Activated CD4-positive, alpha-beta T cell treated with anti-CD3 and anti-CD28 coated beads, Interleukin-2, amount 10 ng/mL, durations not matched to agents 24 days and 14 days (primary cell): ENCODE measurements at regions of chr12 and their contacts with region 1.

Region 1: DNA sequence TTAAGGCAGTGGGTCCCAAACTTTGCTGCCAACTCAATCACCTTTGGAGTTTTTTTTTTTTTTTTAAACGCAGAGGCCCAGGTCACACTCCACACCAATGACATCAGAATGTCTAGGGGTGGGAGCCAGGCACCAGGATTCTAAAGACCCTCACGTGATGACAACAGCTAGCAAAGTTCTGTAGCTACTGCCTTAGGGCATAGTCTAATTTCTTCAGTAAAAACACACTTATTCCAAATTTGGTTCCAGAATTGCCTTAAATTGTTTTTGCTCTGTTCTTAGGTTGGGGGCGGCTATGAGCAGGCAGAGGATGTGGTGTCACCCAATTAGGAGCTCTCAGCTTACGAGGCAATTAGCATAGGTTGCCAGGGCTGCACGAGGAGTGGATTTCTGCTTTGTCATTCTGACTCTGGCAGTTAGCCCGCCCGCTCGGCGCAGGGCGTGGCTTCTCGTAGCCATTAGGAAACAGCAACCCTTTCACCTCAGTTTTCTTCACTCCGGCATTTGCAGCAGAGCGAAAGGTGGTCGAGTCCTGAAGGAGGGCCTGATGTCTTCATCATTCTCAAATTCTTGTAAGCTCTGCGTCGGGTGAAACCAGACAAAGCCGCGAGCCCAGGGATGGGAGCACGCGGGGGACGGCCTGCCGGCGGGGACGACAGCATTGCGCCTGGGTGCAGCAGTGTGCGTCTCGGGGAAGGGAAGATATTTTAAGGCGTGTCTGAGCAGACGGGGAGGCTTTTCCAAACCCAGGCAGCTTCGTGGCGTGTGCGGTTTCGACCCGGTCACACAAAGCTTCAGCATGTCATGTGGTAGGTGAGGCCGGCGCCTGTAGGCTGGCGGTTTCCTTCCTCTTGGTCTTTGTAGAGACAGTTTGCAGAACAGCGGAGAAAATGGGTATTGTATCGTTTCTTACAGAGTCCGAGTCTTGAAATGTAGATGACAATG is 16.7 kb upstream of the EID3 start:
- DNase-seq: peak; percentile 97
- H3K4me3 Mint-ChIP-seq: peak overlapping the region; percentile 96
- H3K27ac Mint-ChIP-seq: peak overlapping the region; percentile 98
- H3K4me1 Mint-ChIP-seq: peaks cover 25% of the 10 kb centered on the region
- H3K27me3 Mint-ChIP-seq: no peaks in the 10 kb centered on the region

Region 2: GRCh38 chr12:103840876-103841689 is 445.7 kb before region 1 on chr12 and contains the start of gene NT5DC3:
- intact Hi-C with region 1: loop called (anchors 1 kb)
- DNase-seq: peak; percentile 93
- H3K4me3 Mint-ChIP-seq: peak within 1 kb of the TSS; percentile 85
- H3K27ac Mint-ChIP-seq: peak within 1 kb of the TSS; percentile 86
- H3K4me1 Mint-ChIP-seq: peaks cover 13% of the 10 kb centered on the region
- H3K27me3 Mint-ChIP-seq: peaks cover 33% of the 10 kb centered on the region
- total RNA-seq, gene NT5DC3: 12.3 and 14.9 TPM in 2 replicates

Region 3: GRCh38 chr12:103901518-103902173 is 385.2 kb before region 1 on chr12:
- intact Hi-C with region 1: no loop called
- DNase-seq: peak; percentile 65
- H3K4me3 Mint-ChIP-seq: peak overlapping the region; percentile 50
- H3K27ac Mint-ChIP-seq: no peak overlapping the region
- H3K4me1 Mint-ChIP-seq: peaks cover 11% of the 10 kb centered on the region
- H3K27me3 Mint-ChIP-seq: no peaks in the 10 kb centered on the region

Region 4: GRCh38 chr12:103965590-103966504 is 321.0 kb before region 1 on chr12 and contains the start of gene TDG:
- intact Hi-C with region 1: loop called (anchors 5 kb)
- DNase-seq: peak; percentile 99
- H3K4me3 Mint-ChIP-seq: peak within 1 kb of the TSS; percentile 98
- H3K27ac Mint-ChIP-seq: peak within 1 kb of the TSS; percentile 99
- H3K4me1 Mint-ChIP-seq: peaks cover 39% of the 10 kb centered on the region
- H3K27me3 Mint-ChIP-seq: peaks cover 2% of the 10 kb centered on the region
- total RNA-seq, gene TDG: 74.5 and 76.4 TPM in 2 replicates

Region 5: GRCh38 chr12:104137913-104138796 is 148.7 kb before region 1 on chr12 and contains the start of gene NFYB:
- intact Hi-C with region 1: loop called (anchors 2 kb)
- DNase-seq: peak; percentile 98
- H3K4me3 Mint-ChIP-seq: peak within 1 kb of the TSS; percentile 87
- H3K27ac Mint-ChIP-seq: peak within 1 kb of the TSS; percentile 91
- H3K4me1 Mint-ChIP-seq: peaks cover 16% of the 10 kb centered on the region
- H3K27me3 Mint-ChIP-seq: peaks cover 17% of the 10 kb centered on the region
- total RNA-seq, gene NFYB: 25.4 and 28.6 TPM in 2 replicates

Region 6: GRCh38 chr12:104215638-104216297 is 71.0 kb before region 1 on chr12 and contains the start of gene TXNRD1:
- intact Hi-C with region 1: loop called (anchors 1 kb)
- DNase-seq: peak; percentile 95
- H3K4me3 Mint-ChIP-seq: peak within 1 kb of the TSS; percentile 79
- H3K27ac Mint-ChIP-seq: peak within 1 kb of the TSS; percentile 76
- H3K4me1 Mint-ChIP-seq: peaks cover 28% of the 10 kb centered on the region
- H3K27me3 Mint-ChIP-seq: peaks cover 3% of the 10 kb centered on the region
- total RNA-seq, gene TXNRD1: 99.6 and 99.7 TPM in 2 replicates

Region 7: DNA sequence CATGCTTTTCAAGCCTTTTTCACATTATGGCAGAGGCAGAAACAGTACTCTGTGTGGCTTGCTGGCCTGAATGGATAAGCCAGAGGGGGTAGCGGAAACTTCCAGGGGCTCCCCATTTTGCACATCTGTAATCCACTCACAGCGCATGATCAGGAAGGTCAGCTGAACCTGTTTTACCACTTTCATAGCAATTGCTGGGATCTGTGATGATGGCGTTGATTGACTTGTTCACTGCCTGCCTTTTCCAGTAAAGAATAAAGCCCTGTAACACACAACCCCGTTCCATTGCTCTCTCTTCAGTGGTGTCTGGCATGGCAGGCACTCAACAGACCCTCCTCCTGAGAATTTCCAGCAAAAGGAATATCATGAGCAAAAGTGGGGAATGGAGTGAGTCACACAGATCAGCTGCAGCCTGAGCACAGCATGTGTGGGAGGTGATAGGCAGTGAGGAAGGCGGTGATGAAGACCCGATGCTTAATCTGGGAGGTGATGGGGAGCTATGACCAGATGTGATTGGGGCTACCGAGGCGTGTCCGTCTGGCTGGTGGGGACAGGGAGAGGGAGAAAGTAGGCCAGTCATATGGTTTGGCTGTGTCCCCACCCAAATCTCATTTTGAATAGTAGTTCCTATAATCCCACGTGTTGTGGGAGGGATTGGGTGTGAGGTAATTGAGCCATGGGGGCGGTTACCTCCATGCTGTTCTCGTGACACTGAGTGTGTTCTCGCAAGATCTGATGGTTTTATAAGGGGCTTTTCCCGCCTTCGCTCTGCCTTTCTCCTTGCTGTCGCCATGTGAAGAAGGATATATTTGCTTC is 125.2 kb after region 1 on chr12:
- intact Hi-C with region 1: no loop called
- DNase-seq: no peak
- H3K4me3 Mint-ChIP-seq: no peak overlapping the region
- H3K27ac Mint-ChIP-seq: no peak overlapping the region
- H3K4me1 Mint-ChIP-seq: peaks cover 7% of the 10 kb centered on the region
- H3K27me3 Mint-ChIP-seq: peaks cover 4% of the 10 kb centered on the region

Region 8: GRCh38 chr12:104671407-104672098 is 384.7 kb after region 1 on chr12:
- intact Hi-C with region 1: loop called (anchors 5 kb)
- DNase-seq: peak; percentile 92
- H3K4me3 Mint-ChIP-seq: peak overlapping the region; percentile 57
- H3K27ac Mint-ChIP-seq: peak overlapping the region; percentile 89
- H3K4me1 Mint-ChIP-seq: peaks cover 59% of the 10 kb centered on the region
- H3K27me3 Mint-ChIP-seq: no peaks in the 10 kb centered on the region

Region 9: GRCh38 chr12:105235732-105236476 is 949.1 kb after region 1 on chr12 and contains the start of gene APPL2:
- intact Hi-C with region 1: loop called (anchors 2 kb)
- DNase-seq: peak; percentile 94
- H3K4me3 Mint-ChIP-seq: peak within 1 kb of the TSS; percentile 87
- H3K27ac Mint-ChIP-seq: peak within 1 kb of the TSS; percentile 85
- H3K4me1 Mint-ChIP-seq: peaks cover 32% of the 10 kb centered on the region
- H3K27me3 Mint-ChIP-seq: peaks cover 2% of the 10 kb centered on the region
- total RNA-seq, gene APPL2: 18.2 and 20.5 TPM in 2 replicates